HEK293 (cell line): ENCODE measurements at regions of chr3 and their contacts with region 1.

Region 1: GRCh38 chr3:43769471-43770425 is 79.0 kb downstream of the ABHD5 start:
- H3K4me3 ChIP-seq: peak overlapping the region; percentile 22
- H3K27ac ChIP-seq: no peak overlapping the region
- H3K4me1 ChIP-seq: no peaks in the 10 kb centered on the region
- CTCF ChIP-seq: peak; percentile 87

Region 2: GRCh38 chr3:43753781-43754201 is 16.0 kb before region 1 on chr3:
- CTCF ChIA-PET with region 1: interaction called, 12 read pairs
- POLR2A ChIA-PET with region 1: no interaction called
- H3K4me3 ChIP-seq: no peak overlapping the region
- H3K27ac ChIP-seq: no peak overlapping the region
- H3K4me1 ChIP-seq: no peaks in the 10 kb centered on the region
- CTCF ChIP-seq: no peak